ENCODE measurements at regions of chr13 and their contacts with region 1.

Region 1: GRCh38 chr13:87398047-87398446 is 273.1 kb upstream of the SLITRK5 start:
- DNase-seq: no peak
- H3K4me3 ChIP-seq: no peak overlapping the region
- H3K27ac ChIP-seq: no peak overlapping the region
- H3K4me1 ChIP-seq: peaks cover 6% of the 10 kb centered on the region
- CTCF ChIP-seq: 0 out of 2 replicates have a peak, but pooled peaks have one; percentile 15

Region 2: DNA sequence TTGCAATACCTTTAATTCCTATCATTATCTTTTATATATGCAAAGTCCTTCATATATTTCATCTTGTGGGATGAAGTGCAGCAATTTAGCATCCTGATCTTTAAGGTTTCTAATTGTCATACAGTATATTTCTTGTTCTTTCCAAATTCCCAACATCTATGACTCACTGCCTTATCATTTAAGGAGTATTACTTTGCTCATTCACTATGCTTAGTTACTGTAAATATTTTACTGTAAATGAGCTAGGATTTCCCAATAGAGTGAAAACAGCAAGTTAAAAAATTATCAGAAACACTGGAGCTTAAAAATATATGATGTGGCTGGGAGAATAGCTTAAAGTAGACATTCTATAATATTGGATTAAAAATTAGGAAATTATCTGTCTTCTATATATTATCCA is 1668.8 kb before region 1 on chr13:
- CTCF ChIA-PET with region 1: no interaction called
- POLR2A ChIA-PET with region 1: no interaction called
- intact Hi-C with region 1: no loop called
- DNase-seq: no peak
- H3K4me3 ChIP-seq: no peak overlapping the region
- H3K27ac ChIP-seq: no peak overlapping the region
- H3K4me1 ChIP-seq: no peaks in the 10 kb centered on the region
- CTCF ChIP-seq: no peak

Region 3: DNA sequence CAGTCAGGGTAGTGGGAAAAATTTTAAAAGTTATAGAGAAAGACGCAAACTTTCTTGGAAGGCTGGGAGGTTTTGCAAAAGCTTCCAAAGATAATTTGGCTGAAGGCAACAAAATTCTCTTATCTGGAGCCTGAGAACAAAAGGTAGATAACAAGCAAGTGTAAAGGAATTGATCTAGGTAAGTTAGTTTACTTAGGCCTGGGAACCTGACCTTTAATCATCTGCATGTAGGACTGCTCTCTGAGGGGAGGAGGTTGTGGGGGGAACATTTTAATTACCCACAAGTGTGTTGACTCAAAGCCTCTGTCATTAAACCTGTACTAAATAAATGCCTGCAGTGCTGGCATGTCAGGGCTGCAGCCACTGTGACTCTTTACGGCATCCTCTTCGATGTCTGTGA is 259.2 kb before region 1 on chr13:
- CTCF ChIA-PET with region 1: no interaction called
- POLR2A ChIA-PET with region 1: no interaction called
- intact Hi-C with region 1: no loop called
- DNase-seq: no peak
- H3K4me3 ChIP-seq: no peak overlapping the region
- H3K27ac ChIP-seq: no peak overlapping the region
- H3K4me1 ChIP-seq: no peaks in the 10 kb centered on the region
- CTCF ChIP-seq: no peak

Region 4: GRCh38 chr13:87384099-87384498 is 13.9 kb before region 1 on chr13:
- CTCF ChIA-PET with region 1: interaction called, 5 read pairs
- POLR2A ChIA-PET with region 1: interaction called, 18 read pairs
- intact Hi-C with region 1: no loop called
- DNase-seq: no peak
- H3K4me3 ChIP-seq: no peak overlapping the region
- H3K27ac ChIP-seq: no peak overlapping the region
- H3K4me1 ChIP-seq: no peaks in the 10 kb centered on the region
- CTCF ChIP-seq: no peak

Region 5: DNA sequence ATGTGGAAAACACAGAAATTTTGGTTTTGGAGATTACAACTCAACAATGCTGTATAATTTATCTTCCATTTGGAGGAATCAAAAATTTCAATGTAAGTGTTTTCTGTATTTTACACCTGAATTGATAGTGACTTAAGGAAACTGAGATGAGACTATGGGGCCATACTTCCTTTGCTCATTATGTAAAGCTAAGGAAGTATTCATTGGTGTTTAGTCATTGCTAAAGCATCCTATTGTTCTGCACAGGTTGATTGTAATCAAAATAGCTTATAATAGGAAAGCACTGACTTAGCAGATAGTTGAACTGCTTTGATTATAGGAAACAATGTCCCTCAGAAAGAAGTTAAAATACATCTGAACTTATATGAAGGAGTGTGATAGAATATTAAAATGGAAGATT is 28.7 kb after region 1 on chr13:
- CTCF ChIA-PET with region 1: no interaction called
- POLR2A ChIA-PET with region 1: interaction called, 11 read pairs
- intact Hi-C with region 1: no loop called
- DNase-seq: no peak
- H3K4me3 ChIP-seq: no peak overlapping the region
- H3K27ac ChIP-seq: no peak overlapping the region
- H3K4me1 ChIP-seq: peaks cover 15% of the 10 kb centered on the region
- CTCF ChIP-seq: no peak

Region 6: GRCh38 chr13:88281841-88282240 is 883.8 kb after region 1 on chr13:
- CTCF ChIA-PET with region 1: no interaction called
- POLR2A ChIA-PET with region 1: interaction called, 11 read pairs
- intact Hi-C with region 1: no loop called
- DNase-seq: no peak
- H3K4me3 ChIP-seq: no peak overlapping the region
- H3K27ac ChIP-seq: no peak overlapping the region
- H3K4me1 ChIP-seq: no peaks in the 10 kb centered on the region
- CTCF ChIP-seq: no peak